ENCODE measurements at regions of chr11 and their contacts with region 1.

Region 1: GRCh38 chr11:6682936-6683861 is at the start of gene MRPL17:
- DNase-seq: peak; percentile 100
- ATAC-seq: peak; percentile 98
- total RNA-seq, gene MRPL17: 40.0 to 48.6 TPM

Region 2: DNA sequence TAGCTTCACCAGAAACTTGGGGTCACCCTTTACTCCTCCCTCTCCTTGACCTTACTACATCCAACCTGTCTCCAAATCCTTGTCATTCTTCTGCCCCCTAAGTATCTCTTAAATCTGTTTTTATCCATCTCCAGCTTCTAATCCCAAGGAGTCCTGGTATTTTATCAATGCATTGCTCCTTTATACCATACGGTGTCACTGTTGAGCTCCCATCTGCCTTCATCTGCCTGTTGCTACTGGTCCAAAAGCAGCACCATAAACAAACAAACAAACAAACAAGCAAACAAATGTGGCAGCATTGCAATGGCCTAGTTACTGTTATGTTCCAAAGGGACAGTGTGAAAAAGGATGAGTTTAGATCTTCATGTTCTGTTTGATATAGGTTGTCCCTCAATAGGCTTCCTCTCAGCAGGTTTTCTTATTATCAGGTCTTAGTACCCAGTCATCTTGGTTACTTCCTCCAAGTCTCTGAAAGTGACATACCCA is 151.9 kb before region 1 on chr11:
- intact Hi-C with region 1: loop called (anchors 5 to 10 kb)
- DNase-seq: no peak
- ATAC-seq: peak; percentile 67 to 71

Region 3: GRCh38 chr11:6603287-6604080 is 79.7 kb before region 1 on chr11 and contains the starts of genes ILK and RRP8:
- intact Hi-C with region 1: loop called in 1 of 2 experiments (anchors 5 kb)
- DNase-seq: peak; percentile 94
- ATAC-seq: peak; percentile 91 to 92
- total RNA-seq, gene ILK: 166 to 183 TPM
- total RNA-seq, gene RRP8: 14.2 to 18.0 TPM

Region 4: GRCh38 chr11:6622261-6623171 is 60.7 kb before region 1 on chr11:
- intact Hi-C with region 1: loop called in 1 of 2 experiments (anchors 5 kb)
- DNase-seq: no peak
- ATAC-seq: no peak